CD4-positive, alpha-beta memory T cell (primary cell): ENCODE measurements at regions of chr1 and their contacts with region 1.

Region 1: GRCh38 chr1:41573785-41574713 is 89.6 kb upstream of the EDN2 start:
- DNase-seq: peak; percentile 70 to 79 (median 76)
- H3K4me3 ChIP-seq: no peak overlapping the region
- H3K4me3 Mint-ChIP-seq: no peak overlapping the region
- H3K27ac ChIP-seq: no peak overlapping the region
- H3K27ac Mint-ChIP-seq: peak overlapping the region in 2 of 7 donors; percentile 12 to 31
- H3K4me1 ChIP-seq: peaks cover 5% of the 10 kb centered on the region
- H3K4me1 Mint-ChIP-seq: peaks cover 6 to 15% (median 9%) of the 10 kb centered on the region in 4 donors
- H3K27me3 ChIP-seq: no peaks in the 10 kb centered on the region
- H3K27me3 Mint-ChIP-seq: no peaks in the 10 kb centered on the region

Region 2: GRCh38 chr1:41261926-41262618 is 312.0 kb before region 1 on chr1:
- CTCF ChIA-PET with region 1: no interaction called
- POLR2A ChIA-PET with region 1: no interaction called
- intact Hi-C with region 1: no loop called
- DNase-seq: no peak
- H3K4me3 ChIP-seq: no peak overlapping the region
- H3K4me3 Mint-ChIP-seq: no peak overlapping the region
- H3K27ac ChIP-seq: no peak overlapping the region
- H3K27ac Mint-ChIP-seq: no peak overlapping the region
- H3K4me1 ChIP-seq: no peaks in the 10 kb centered on the region
- H3K4me1 Mint-ChIP-seq: no peaks in the 10 kb centered on the region
- H3K27me3 ChIP-seq: no peaks in the 10 kb centered on the region
- H3K27me3 Mint-ChIP-seq: peaks cover 2 to 5% of the 10 kb centered on the region in 2 donors

Region 3: GRCh38 chr1:41607808-41608207 is 33.8 kb after region 1 on chr1:
- CTCF ChIA-PET with region 1: no interaction called
- POLR2A ChIA-PET with region 1: no interaction called
- intact Hi-C with region 1: no loop called
- DNase-seq: no peak
- H3K4me3 ChIP-seq: no peak overlapping the region
- H3K4me3 Mint-ChIP-seq: no peak overlapping the region
- H3K27ac ChIP-seq: no peak overlapping the region
- H3K27ac Mint-ChIP-seq: no peak overlapping the region
- H3K4me1 ChIP-seq: no peaks in the 10 kb centered on the region
- H3K4me1 Mint-ChIP-seq: peaks cover 0 to 5% (median 1%) of the 10 kb centered on the region in 4 donors
- H3K27me3 ChIP-seq: no peaks in the 10 kb centered on the region
- H3K27me3 Mint-ChIP-seq: no peaks in the 10 kb centered on the region

Region 4: DNA sequence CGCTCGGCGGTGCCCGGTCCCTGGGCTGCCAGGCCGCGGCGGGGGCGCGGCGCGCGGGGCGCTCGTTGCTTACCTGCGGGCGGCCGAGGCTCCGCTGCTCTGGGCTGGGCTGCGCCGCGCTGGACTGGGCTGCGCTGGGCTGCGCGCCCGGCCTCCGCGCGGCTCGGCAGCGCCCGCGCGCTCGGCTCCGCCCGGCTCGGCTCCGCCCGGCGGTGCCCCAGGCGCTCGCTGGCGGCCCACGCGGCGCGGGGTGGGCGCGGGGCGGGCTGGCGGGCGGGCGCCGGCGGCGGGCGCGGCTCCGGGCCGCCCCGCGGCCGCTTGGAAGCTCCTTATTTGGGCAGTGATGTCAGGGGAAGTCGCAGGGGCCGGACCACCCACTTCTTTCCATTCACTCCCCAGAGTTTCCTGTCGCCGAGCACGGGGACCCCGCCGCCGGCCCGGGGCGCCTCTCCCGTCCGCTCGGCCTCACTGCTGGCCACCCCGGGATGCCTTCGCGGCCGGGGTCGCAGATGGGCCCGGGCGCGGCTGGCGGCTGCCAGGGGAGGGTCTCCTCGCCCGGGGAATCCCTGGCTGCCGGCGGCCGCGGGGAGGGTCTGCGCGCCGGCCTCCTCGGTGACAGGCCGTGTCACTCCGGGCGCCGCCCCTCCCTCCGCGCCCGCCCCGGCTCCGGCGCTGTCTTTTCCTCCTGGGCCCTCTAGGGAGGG is 88.2 kb after region 1 on chr1:
- CTCF ChIA-PET with region 1: no interaction called
- POLR2A ChIA-PET with region 1: no interaction called
- intact Hi-C with region 1: loop called (anchors 10 kb)
- DNase-seq: peak; percentile 68 to 81 (median 76)
- H3K4me3 ChIP-seq: peak overlapping the region in 1 of 2 donors; percentile 64
- H3K4me3 Mint-ChIP-seq: peak overlapping the region in 3 of 8 donors; percentile 68 to 93 (median 79)
- H3K27ac ChIP-seq: peak overlapping the region; percentile 67
- H3K27ac Mint-ChIP-seq: peak overlapping the region in 6 of 7 donors; percentile 48 to 84 (median 55)
- H3K4me1 ChIP-seq: peaks cover 82% of the 10 kb centered on the region
- H3K4me1 Mint-ChIP-seq: peaks cover 58 to 89% (median 75%) of the 10 kb centered on the region in 4 donors
- H3K27me3 ChIP-seq: no peaks in the 10 kb centered on the region
- H3K27me3 Mint-ChIP-seq: no peaks in the 10 kb centered on the region

Region 5: GRCh38 chr1:41802532-41803501 is 228.8 kb after region 1 on chr1:
- CTCF ChIA-PET with region 1: interaction called, 14 read pairs
- POLR2A ChIA-PET with region 1: interaction called, 3 read pairs
- intact Hi-C with region 1: no loop called
- DNase-seq: peak; percentile 51 to 64 (median 59)
- H3K4me3 ChIP-seq: peak overlapping the region in 1 of 2 donors; percentile 35
- H3K4me3 Mint-ChIP-seq: peak overlapping the region; percentile 12 to 79 (median 72)
- H3K27ac ChIP-seq: peak overlapping the region; percentile 55
- H3K27ac Mint-ChIP-seq: peak overlapping the region; percentile 75 to 97 (median 93)
- H3K4me1 ChIP-seq: peaks cover 87% of the 10 kb centered on the region
- H3K4me1 Mint-ChIP-seq: peaks cover 72 to 93% (median 82%) of the 10 kb centered on the region in 4 donors
- H3K27me3 ChIP-seq: no peaks in the 10 kb centered on the region
- H3K27me3 Mint-ChIP-seq: no peaks in the 10 kb centered on the region

Region 6: DNA sequence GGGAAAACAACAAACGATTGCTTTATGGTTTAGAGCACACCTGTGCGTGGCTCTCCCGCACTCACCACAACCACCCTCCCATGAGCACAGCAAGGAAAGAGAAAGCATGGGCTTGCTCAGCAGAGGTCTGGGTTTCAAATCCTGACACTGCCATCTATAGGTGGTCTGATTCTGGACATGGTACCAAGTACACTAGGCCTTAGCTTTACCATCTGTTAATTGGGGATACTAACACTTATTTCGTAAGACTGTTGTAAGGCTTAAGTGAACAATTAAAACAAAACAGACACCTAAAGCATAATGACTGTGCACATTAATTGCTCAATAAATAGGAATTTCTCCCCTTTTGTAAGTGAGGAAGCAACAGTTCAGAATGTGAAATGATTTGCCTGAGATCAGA is 294.6 kb after region 1 on chr1:
- CTCF ChIA-PET with region 1: interaction called, 21 read pairs
- POLR2A ChIA-PET with region 1: interaction called, 5 read pairs
- intact Hi-C with region 1: no loop called
- DNase-seq: peak in 3 of 5 donors; percentile 12 to 31 (median 13)
- H3K4me3 ChIP-seq: no peak overlapping the region
- H3K4me3 Mint-ChIP-seq: peak overlapping the region in 1 of 8 donors; percentile 22
- H3K27ac ChIP-seq: no peak overlapping the region
- H3K27ac Mint-ChIP-seq: peak overlapping the region in 3 of 7 donors; percentile 48 to 65 (median 50)
- H3K4me1 ChIP-seq: peaks cover 8% of the 10 kb centered on the region
- H3K4me1 Mint-ChIP-seq: peaks cover 10 to 17% (median 16%) of the 10 kb centered on the region in 4 donors
- H3K27me3 ChIP-seq: no peaks in the 10 kb centered on the region
- H3K27me3 Mint-ChIP-seq: no peaks in the 10 kb centered on the region

Region 7: GRCh38 chr1:41898191-41898713 is 324.2 kb after region 1 on chr1:
- CTCF ChIA-PET with region 1: no interaction called
- POLR2A ChIA-PET with region 1: no interaction called
- intact Hi-C with region 1: loop called (anchors 2 kb)
- DNase-seq: peak; percentile 83 to 92 (median 88)
- H3K4me3 ChIP-seq: peak overlapping the region in 1 of 2 donors; percentile 36
- H3K4me3 Mint-ChIP-seq: peak overlapping the region; percentile 40 to 87 (median 81)
- H3K27ac ChIP-seq: peak overlapping the region; percentile 58
- H3K27ac Mint-ChIP-seq: peak overlapping the region; percentile 91 to 99 (median 96)
- H3K4me1 ChIP-seq: peaks cover 95% of the 10 kb centered on the region
- H3K4me1 Mint-ChIP-seq: peaks cover 78 to 90% (median 81%) of the 10 kb centered on the region in 4 donors
- H3K27me3 ChIP-seq: no peaks in the 10 kb centered on the region
- H3K27me3 Mint-ChIP-seq: no peaks in the 10 kb centered on the region

Region 8: DNA sequence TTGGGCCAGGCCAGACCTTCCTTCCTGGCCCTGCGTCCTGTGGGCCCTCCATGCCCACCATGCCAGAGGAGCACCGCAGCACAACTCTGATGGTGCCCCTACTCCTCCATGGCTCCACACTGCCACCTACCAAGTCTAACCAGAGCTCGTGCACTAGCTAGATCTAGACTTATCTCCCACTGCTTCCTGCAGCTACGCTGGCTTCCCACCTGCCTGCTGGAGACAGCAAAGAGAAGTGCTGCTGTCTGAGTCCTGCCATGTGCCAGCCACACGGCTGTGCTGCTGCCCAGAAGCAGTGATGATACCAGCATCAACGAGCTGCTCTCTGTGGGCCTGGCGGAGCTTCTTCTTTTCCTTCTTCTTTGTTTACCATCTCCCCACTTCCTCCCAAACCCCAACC is 583.6 kb after region 1 on chr1:
- CTCF ChIA-PET with region 1: interaction called, 3 read pairs
- POLR2A ChIA-PET with region 1: no interaction called
- intact Hi-C with region 1: loop called (anchors 5 kb)
- DNase-seq: no peak
- H3K4me3 ChIP-seq: no peak overlapping the region
- H3K4me3 Mint-ChIP-seq: no peak overlapping the region
- H3K27ac ChIP-seq: no peak overlapping the region
- H3K27ac Mint-ChIP-seq: peak overlapping the region in 2 of 7 donors; percentile 14 to 88
- H3K4me1 ChIP-seq: no peaks in the 10 kb centered on the region
- H3K4me1 Mint-ChIP-seq: peaks cover 4 to 9% (median 6%) of the 10 kb centered on the region in 4 donors
- H3K27me3 ChIP-seq: no peaks in the 10 kb centered on the region
- H3K27me3 Mint-ChIP-seq: peaks cover under 1 to 5% of the 10 kb centered on the region in 2 donors